B cell (primary cell): ENCODE measurements at regions of chr11 and their contacts with region 1.

Region 1: GRCh38 chr11:121426476-121427399 is 25.4 kb upstream of the SORL1 start:
- DNase-seq: peak; percentile 77
- ATAC-seq: peak; percentile 48
- H3K4me3 ChIP-seq: peak overlapping the region in 4 of 5 experiments; percentile 25 to 54 (median 43)
- H3K4me3 Mint-ChIP-seq: peak overlapping the region; percentile 77
- H3K27ac ChIP-seq: no peak overlapping the region
- H3K27ac Mint-ChIP-seq: peak overlapping the region; percentile 64
- H3K4me1 ChIP-seq: peaks cover 52 to 63% of the 10 kb centered on the region in 2 donors
- H3K4me1 Mint-ChIP-seq: peaks cover 78% of the 10 kb centered on the region
- H3K27me3 ChIP-seq: no peaks in the 10 kb centered on the region
- H3K27me3 Mint-ChIP-seq: no peaks in the 10 kb centered on the region
- CTCF ChIP-seq: peak; percentile 22

Region 2: DNA sequence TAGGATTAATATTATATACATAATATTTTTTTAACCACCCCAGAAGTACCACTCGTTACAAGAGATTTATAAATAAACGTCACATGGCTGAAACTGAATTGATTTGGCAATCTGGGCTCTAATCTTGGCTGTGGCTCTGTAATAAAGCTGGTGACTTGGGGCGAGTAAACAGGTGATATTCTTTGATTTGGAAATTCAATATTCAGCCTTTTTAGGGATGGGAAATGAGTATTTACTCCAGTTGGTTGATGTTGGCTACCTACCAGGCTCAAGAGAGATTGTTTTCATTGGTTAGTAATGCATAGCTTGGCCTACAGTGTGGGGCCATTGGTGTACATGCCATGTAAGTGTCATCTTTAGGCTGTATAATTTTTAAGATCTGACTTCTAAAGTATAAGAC is 143.7 kb after region 1 on chr11:
- CTCF ChIA-PET with region 1: no interaction called
- POLR2A ChIA-PET with region 1: no interaction called
- intact Hi-C with region 1: loop called (anchors 1 kb)
- DNase-seq: peak; percentile 19
- ATAC-seq: no peak
- H3K4me3 ChIP-seq: no peak overlapping the region
- H3K4me3 Mint-ChIP-seq: no peak overlapping the region
- H3K27ac ChIP-seq: peak overlapping the region in 1 of 2 donors; percentile 42
- H3K27ac Mint-ChIP-seq: no peak overlapping the region
- H3K4me1 ChIP-seq: peaks cover 8 to 38% of the 10 kb centered on the region in 2 donors
- H3K4me1 Mint-ChIP-seq: peaks cover 43% of the 10 kb centered on the region
- H3K27me3 ChIP-seq: peaks cover 0 to 19% (median 2%) of the 10 kb centered on the region in 4 experiments
- H3K27me3 Mint-ChIP-seq: peaks cover 21% of the 10 kb centered on the region
- CTCF ChIP-seq: no peak